Endothelial cell of umbilical vein (primary cell): ENCODE measurements at regions of chr17 and their contacts with region 1.

Region 1: GRCh38 chr17:63523253-63523855 is at the start of gene KCNH6:
- DNase-seq: no peak
- H3K4me3 ChIP-seq: peak within 1 kb of the TSS in 1 of 3 experiments; percentile 17
- H3K27ac ChIP-seq: no peak within 1 kb of the TSS
- H3K4me1 ChIP-seq: peaks cover 4% of the 10 kb centered on the region
- H3K27me3 ChIP-seq: peaks cover 3 to 10% of the 10 kb centered on the region in 2 experiments
- CTCF ChIP-seq: no peak
- POLR2A ChIP-seq: no peak
- total RNA-seq, gene KCNH6: not detected in 2 replicates

Region 2: DNA sequence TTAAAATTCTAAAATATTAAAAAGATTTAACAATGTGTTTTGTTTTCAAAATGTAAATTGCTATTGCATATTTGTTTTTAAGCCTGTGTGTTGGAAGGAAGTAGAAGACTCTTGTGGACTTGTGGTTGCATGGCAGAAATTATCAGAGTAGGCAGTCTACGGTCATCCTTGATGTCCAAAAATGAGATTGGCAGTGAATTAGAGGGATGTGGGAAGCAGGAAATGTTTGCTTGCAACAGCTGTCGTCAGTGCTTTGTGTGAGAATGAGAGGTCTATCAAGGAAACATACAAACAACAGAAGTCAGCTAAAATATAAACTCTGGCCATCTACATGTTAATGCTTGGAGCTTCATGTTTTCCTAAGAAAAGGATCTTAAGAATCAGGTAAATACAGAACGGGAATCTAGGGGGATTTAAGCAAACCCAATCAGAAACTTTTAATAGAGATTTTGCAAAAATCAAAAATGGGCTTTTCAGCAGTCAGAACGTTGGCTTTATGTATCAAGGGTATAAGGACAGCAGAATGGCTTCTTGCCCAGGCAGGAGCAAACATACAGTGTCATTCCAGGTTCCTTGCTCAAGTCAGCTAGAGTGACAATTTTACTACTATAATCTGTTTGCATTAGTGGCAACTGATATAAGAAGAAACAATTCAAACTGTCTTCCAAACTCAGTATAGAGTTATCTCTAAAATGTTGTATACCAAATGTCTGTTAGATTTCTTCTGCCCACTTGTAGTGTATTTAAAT is 273.9 kb before region 1 on chr17:
- CTCF ChIA-PET with region 1: no interaction called
- POLR2A ChIA-PET with region 1: no interaction called
- dilution Hi-C with region 1: no loop called
- intact Hi-C with region 1: no loop called
- DNase-seq: peak; percentile 89
- H3K4me3 ChIP-seq: no peak overlapping the region
- H3K27ac ChIP-seq: peak overlapping the region; percentile 6
- H3K4me1 ChIP-seq: peaks cover 11% of the 10 kb centered on the region
- H3K27me3 ChIP-seq: no peaks in the 10 kb centered on the region
- CTCF ChIP-seq: no peak
- POLR2A ChIP-seq: no peak

Region 3: DNA sequence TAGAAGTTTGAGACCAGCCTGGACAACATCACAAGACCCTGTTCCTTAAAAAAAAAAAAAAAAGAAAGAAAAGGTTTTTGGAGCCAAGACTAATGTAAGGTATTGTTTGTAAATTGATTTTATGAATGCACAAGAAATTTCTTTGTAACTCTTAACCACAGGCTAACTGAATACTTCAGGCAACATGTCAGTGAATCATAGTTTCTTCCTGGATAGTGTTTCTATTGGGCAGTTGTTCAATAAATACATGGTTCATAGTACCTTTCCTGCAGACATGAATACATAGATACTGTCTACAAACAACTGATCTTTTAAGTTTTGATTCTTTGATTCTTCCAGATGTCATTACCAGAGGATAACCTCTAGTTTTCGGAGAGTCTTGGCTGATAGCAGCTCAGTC is 262.2 kb after region 1 on chr17:
- CTCF ChIA-PET with region 1: no interaction called
- POLR2A ChIA-PET with region 1: no interaction called
- dilution Hi-C with region 1: no loop called
- intact Hi-C with region 1: loop called (anchors 1 kb)
- DNase-seq: peak; percentile 39
- H3K4me3 ChIP-seq: no peak overlapping the region
- H3K27ac ChIP-seq: no peak overlapping the region
- H3K4me1 ChIP-seq: peaks cover 6% of the 10 kb centered on the region
- H3K27me3 ChIP-seq: no peaks in the 10 kb centered on the region
- CTCF ChIP-seq: no peak
- POLR2A ChIP-seq: no peak

Region 4: GRCh38 chr17:63809970-63810369 is 286.6 kb after region 1 on chr17:
- CTCF ChIA-PET with region 1: no interaction called
- POLR2A ChIA-PET with region 1: interaction called, 11 read pairs
- dilution Hi-C with region 1: no loop called
- intact Hi-C with region 1: no loop called
- DNase-seq: no peak
- H3K4me3 ChIP-seq: no peak overlapping the region
- H3K27ac ChIP-seq: no peak overlapping the region
- H3K4me1 ChIP-seq: no peaks in the 10 kb centered on the region
- H3K27me3 ChIP-seq: no peaks in the 10 kb centered on the region
- CTCF ChIP-seq: no peak
- POLR2A ChIP-seq: no peak